ENCODE measurements at regions of chr19 and their contacts with region 1.

Region 1: GRCh38 chr19:40425450-40426287 is at the start of gene SERTAD1:
- DNase-seq: peak; percentile 98
- ATAC-seq: peak; percentile 88
- H3K4me3 ChIP-seq: peak within 1 kb of the TSS; percentile 63 to 94 (median 86)
- H3K27ac ChIP-seq: peak within 1 kb of the TSS; percentile 96
- H3K4me1 ChIP-seq: peaks cover 48% of the 10 kb centered on the region
- H3K27me3 ChIP-seq: no peaks in the 10 kb centered on the region; a peak in 1 of 5 replicates
- CTCF ChIP-seq: peak; percentile 78
- EP300 ChIP-seq: no peak
- POLR2A ChIP-seq: peak; percentile 97 to 99
- RAD21 ChIP-seq: peak; percentile 43; the same call in 1 of the 2 replicates
- total RNA-seq, gene SERTAD1: 4.3 and 4.7 TPM in 2 replicates

Region 2: DNA sequence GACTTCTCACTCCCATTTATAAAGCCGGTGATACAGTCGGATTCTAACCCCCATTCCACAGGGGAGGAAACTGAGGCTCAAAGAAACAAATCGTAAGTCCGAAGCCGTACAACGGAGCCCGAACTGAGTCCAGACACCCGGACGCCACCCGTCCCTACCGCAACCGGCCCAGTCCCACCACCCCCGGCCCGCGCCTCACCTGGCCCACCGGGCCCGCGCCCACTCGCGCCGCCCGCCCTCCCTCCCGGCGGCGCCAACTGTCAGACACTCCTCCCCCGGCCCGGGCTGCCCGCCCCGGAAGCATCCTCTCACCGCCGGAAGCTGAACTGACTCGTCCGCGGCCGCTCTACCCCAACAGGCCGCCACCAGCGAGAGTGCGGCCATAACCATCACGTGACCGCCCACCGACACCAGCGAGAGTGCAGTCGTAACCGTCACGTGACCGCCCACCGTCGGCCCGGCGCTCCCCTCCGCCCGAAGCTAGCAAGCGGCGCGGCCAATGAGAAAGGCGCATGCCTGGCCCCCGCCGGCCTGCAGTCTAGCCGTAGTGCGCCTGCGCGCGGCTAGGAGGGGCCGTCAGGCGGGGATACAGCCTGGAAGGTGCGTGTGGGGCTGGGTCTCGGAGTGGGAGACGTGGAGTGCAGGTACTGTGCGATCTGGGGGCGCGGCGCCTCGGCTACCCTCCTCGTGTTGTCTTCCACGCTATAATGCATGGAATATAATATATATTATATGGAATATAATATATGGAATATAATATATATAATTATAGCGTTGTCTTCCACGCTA is 77.3 kb before region 1 on chr19 and contains the starts of genes C19orf47 and PLD3:
- CTCF ChIA-PET with region 1: no interaction called
- POLR2A ChIA-PET with region 1: interaction called, 12 read pairs
- in situ Hi-C with region 1: no loop called
- intact Hi-C with region 1: loop called (anchors 10 kb)
- DNase-seq: peak; percentile 97
- ATAC-seq: peak; percentile 99
- H3K4me3 ChIP-seq: peak within 1 kb of the TSS; percentile 80 to 98 (median 92)
- H3K27ac ChIP-seq: peak within 1 kb of the TSS; percentile 57
- H3K4me1 ChIP-seq: peaks cover 16% of the 10 kb centered on the region
- H3K27me3 ChIP-seq: no peaks in the 10 kb centered on the region; a peak in 1 of 5 replicates
- CTCF ChIP-seq: peak; percentile 21
- EP300 ChIP-seq: peak in 1 of 2 experiments; percentile 26; a peak in 1 of 4 replicates
- POLR2A ChIP-seq: peak; percentile 81 to 92
- RAD21 ChIP-seq: peak; percentile 51; the same call in 1 of the 2 replicates
- total RNA-seq, gene C19orf47: 6.8 and 8.1 TPM in 2 replicates
- total RNA-seq, gene PLD3: 26.8 and 45.7 TPM in 2 replicates

Region 3: DNA sequence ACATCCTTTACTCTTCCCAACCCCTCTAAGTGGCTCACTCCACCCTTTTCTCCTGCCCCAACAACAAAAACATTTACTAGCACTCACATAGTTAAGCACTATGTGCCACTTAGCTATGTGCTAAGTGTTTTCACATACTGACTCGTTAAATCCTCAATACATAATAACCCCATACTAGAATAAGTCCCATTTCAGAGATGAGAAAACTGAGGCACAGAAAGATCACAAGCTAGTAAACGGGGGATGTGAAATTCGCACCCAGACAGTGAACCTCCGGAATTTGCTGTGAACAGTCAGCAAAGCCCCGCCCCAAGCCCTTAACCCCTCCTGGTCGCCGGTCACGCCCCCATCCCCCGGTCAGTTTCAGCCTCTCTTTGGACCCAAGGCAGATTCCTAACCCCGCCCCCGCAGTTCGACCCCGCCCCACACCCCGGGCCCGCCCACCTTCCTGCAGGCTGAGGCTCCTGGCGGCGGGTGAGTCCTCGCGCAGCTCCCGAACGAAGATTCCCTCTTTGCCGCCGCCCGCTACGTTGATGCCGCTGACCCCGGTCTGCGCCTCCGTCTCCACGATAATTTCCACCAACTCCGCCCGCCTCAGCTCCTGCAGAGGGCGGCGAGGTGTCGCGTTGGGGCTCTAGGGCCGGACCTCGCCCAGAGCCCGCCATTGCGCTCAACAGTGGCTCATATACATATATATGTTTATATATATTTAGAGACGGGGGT is 22.2 kb before region 1 on chr19:
- CTCF ChIA-PET with region 1: no interaction called
- POLR2A ChIA-PET with region 1: interaction called, 12 read pairs
- in situ Hi-C with region 1: no loop called
- intact Hi-C with region 1: no loop called
- DNase-seq: peak; percentile 84
- ATAC-seq: peak; percentile 91
- H3K4me3 ChIP-seq: peak overlapping the region; percentile 54 to 73 (median 70); a peak in 5 of 6 replicates
- H3K27ac ChIP-seq: peak overlapping the region; percentile 50
- H3K4me1 ChIP-seq: peaks cover 21% of the 10 kb centered on the region
- H3K27me3 ChIP-seq: peaks cover 2 to 4% of the 10 kb centered on the region in 2 experiments; a peak in 1 of 5 replicates
- CTCF ChIP-seq: 0 out of 2 replicates have a peak, but pooled peaks have one; percentile 3
- EP300 ChIP-seq: no peak
- POLR2A ChIP-seq: peak in 1 of 2 experiments; percentile 52; a peak in 1 of 4 replicates
- RAD21 ChIP-seq: no peak

Region 4: DNA sequence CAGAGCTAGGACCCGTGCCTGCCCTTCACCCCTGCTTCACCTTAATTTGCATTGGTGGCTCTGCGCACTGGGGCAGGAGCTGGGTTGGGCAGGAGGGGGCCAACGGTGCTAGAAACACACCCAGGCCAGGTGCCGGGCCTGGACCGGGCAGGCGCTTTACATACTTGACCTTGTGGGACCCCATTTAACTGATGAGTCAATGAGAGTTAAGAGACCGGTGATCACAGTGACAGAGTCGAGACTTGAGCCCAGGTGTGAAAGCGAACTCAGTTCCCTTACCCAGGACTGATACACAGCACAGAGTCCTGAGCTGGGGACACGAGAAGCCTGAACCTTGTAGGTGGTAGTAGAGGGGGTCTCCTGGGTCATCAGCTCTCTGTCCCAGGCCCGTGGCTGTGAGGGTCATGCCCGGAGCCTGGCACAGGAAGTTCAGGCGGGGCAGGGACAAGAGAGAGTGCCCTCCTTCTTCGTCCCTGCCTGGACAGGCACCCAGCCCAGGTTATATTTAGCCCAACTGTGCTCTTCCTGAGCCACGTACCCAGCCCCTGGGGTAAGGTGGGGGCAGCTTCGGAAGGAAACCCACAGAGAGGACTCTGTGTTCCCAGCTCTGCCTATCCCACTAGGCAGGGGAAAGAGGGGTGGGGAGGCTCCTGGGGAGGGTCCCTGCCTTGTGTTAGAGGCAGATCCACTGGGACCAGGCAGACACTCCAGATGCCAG is 14.4 kb before region 1 on chr19:
- CTCF ChIA-PET with region 1: no interaction called
- POLR2A ChIA-PET with region 1: interaction called, 20 read pairs
- in situ Hi-C with region 1: no loop called
- intact Hi-C with region 1: no loop called
- DNase-seq: no peak
- ATAC-seq: peak; percentile 42
- H3K4me3 ChIP-seq: no peak overlapping the region; a peak in 1 of 6 replicates
- H3K27ac ChIP-seq: no peak overlapping the region
- H3K4me1 ChIP-seq: peaks cover 45% of the 10 kb centered on the region
- H3K27me3 ChIP-seq: peaks cover 2 to 27% of the 10 kb centered on the region in 2 experiments; a peak in 3 of 5 replicates
- CTCF ChIP-seq: no peak
- EP300 ChIP-seq: no peak
- POLR2A ChIP-seq: no peak
- RAD21 ChIP-seq: no peak

Measured in HepG2 (cell line).